Testis (tissue), 5 donors: ENCODE measurements at regions of chr3 and their contacts with region 1.

Region 1: DNA sequence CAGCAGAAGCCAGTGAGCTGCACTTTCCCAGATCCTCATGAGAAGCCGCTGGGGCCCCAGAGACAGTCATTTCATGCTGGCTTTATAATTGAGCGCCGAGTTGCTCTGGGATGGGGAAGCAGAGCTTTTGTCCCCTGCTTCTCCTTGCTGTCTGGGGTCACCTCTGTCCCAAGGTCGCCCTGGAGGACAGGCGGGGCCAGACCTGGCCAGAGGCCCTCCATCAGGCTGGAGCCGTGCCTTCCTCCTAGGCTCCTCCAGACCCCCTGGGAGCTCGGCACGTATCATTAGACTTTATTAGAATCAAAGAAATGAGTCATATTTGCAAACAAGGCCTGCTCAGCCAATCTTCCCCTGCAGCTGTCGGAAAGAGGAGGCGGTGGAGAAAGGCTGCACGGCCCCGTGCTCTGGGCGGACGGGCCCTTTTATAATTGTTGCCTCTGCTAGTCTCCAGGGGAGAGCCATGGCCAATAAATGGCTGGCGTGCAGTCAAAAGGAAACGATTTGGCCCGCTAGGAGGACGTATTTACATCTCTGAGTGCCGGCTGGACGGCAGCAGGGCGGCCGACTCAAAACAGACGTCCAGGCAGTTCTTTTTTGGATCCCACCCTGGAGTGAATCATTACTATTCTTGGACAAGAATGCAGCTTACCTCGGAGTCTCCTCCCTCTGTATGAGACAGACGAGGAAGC is 50.4 kb downstream of the SLC6A6 start:
- DNase-seq: peak; percentile 88
- H3K4me3 ChIP-seq: no peak overlapping the region
- H3K27ac ChIP-seq: peak overlapping the region in 1 of 2 donors; percentile 65
- H3K4me1 ChIP-seq: peaks cover 18% of the 10 kb centered on the region
- H3K27me3 ChIP-seq: no peaks in the 10 kb centered on the region
- CTCF ChIP-seq: no peak
- POLR2A ChIP-seq: no peak

Region 2: DNA sequence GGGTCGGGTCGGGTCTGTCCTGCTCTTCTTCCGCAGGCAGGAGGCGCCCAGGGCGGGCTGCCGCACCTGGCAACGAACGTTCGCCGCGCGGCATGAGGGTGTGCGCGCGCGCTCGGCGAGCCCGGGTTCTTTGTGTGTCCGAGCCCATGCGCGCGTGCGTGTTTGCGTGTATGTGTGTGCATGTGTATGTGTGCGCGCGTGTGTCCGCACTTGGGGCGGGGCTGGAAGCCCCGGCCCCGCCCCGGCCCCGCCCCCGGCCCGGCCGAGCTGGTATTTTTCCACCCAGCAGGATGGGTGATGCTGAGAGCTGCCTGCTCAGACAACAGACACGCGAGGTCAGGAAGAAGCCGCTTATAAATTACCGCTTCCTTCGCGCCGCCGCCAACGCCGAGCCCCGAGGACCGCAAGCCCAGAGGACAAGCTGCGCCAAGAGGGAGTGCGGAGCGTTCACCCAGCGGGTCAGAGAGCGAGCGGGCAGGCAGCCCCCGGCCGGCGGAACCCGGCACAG is 50.5 kb before region 1 on chr3 and contains the start of gene SLC6A6:
- intact Hi-C with region 1: loop called (anchors 10 kb)
- DNase-seq: peak; percentile 96
- H3K4me3 ChIP-seq: peak within 1 kb of the TSS; percentile 60 to 67
- H3K27ac ChIP-seq: peak within 1 kb of the TSS; percentile 35 to 73
- H3K4me1 ChIP-seq: peaks cover 9% of the 10 kb centered on the region
- H3K27me3 ChIP-seq: no peaks in the 10 kb centered on the region
- CTCF ChIP-seq: peak in 1 of 3 experiments; percentile 7
- POLR2A ChIP-seq: no peak
- total RNA-seq, gene SLC6A6: 13.7 to 14.9 TPM

Region 3: DNA sequence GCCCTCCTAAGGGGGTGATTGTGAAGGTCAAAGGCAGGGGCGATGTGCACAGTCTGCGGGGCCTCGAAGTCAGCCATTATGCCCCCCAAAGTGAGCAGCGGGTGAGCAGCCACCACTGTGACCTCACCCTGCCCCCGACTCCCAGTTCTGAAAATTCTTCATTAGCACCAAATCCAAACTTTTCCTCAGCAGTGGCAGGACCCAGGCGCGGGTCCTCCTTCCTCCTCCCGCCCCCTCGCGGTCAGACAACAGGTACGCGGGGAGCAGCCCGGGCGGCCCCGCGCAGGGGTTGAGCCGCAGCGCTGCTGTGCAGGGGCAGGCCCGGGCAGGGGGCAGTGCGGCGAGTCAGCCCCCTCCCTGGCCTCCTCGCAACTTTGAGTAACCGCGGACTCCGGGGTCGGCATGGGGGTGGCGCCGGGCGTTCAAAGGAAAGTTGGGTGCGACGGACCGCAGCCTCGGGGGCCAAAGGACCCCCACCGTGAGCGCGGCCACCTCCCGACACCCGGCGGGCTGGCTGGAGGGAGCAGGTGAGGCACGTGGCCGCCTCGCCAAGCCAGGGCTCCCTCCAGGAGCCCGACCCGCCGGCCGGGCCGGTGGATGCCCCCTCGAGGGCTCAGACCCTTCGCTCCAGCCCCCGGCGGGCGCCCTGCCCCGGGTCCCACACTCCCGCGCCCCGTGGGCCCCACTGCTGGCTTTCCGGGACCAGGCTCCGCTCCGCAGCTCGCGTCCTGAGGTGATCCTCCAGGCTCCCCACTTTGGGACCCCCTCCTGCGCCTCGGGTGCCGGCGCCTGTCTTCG is 149.4 kb after region 1 on chr3:
- intact Hi-C with region 1: no loop called
- DNase-seq: no peak
- H3K4me3 ChIP-seq: peak overlapping the region; percentile 9 to 49
- H3K27ac ChIP-seq: no peak overlapping the region
- H3K4me1 ChIP-seq: no peaks in the 10 kb centered on the region
- H3K27me3 ChIP-seq: no peaks in the 10 kb centered on the region
- CTCF ChIP-seq: no peak
- POLR2A ChIP-seq: no peak